ENCODE measurements at regions of chr17 and their contacts with region 1.

Region 1: DNA sequence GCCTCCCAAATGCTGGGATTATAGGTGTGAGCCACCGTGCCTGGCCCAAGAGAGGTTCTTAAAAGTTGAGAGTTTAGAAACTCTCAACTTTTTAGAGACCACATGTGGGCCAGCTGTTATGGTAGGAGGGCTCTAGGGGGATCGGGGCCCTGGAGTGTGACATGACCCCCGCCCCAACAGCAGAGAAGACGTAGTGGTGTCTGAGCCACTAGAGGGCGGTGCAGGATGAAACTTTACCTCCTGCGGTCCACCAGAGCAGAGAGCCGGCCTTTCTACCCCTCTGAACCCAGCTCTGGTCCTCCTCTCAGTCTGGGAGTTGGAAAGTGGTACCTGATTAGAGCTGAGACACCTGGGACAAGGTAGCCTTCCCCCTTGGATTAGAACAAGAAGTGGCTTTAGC is 7.4 kb downstream of the CDK5RAP3 start:
- DNase-seq: peak; percentile 87
- ATAC-seq: peak; percentile 94
- H3K4me3 Mint-ChIP-seq: no peak overlapping the region
- H3K27ac Mint-ChIP-seq: no peak overlapping the region
- H3K4me1 Mint-ChIP-seq: no peaks in the 10 kb centered on the region
- H3K27me3 Mint-ChIP-seq: no peaks in the 10 kb centered on the region
- CTCF ChIP-seq: peak; percentile 78; the same call in 1 of the 2 replicates

Region 2: GRCh38 chr17:47957591-47958428 is 20.5 kb before region 1 on chr17 and contains the start of gene PRR15L:
- CTCF ChIA-PET with region 1: interaction called, 17 read pairs
- POLR2A ChIA-PET with region 1: no interaction called
- DNase-seq: peak; percentile 66
- ATAC-seq: peak; percentile 80
- H3K4me3 Mint-ChIP-seq: peak within 1 kb of the TSS; percentile 45
- H3K27ac Mint-ChIP-seq: peak within 1 kb of the TSS; percentile 70
- H3K4me1 Mint-ChIP-seq: peaks cover 29% of the 10 kb centered on the region
- H3K27me3 Mint-ChIP-seq: peaks cover 15% of the 10 kb centered on the region
- CTCF ChIP-seq: no peak
- total RNA-seq, gene PRR15L: 0.59 to 1.1 TPM (median 1.1 TPM) in 3 replicates

Region 3: DNA sequence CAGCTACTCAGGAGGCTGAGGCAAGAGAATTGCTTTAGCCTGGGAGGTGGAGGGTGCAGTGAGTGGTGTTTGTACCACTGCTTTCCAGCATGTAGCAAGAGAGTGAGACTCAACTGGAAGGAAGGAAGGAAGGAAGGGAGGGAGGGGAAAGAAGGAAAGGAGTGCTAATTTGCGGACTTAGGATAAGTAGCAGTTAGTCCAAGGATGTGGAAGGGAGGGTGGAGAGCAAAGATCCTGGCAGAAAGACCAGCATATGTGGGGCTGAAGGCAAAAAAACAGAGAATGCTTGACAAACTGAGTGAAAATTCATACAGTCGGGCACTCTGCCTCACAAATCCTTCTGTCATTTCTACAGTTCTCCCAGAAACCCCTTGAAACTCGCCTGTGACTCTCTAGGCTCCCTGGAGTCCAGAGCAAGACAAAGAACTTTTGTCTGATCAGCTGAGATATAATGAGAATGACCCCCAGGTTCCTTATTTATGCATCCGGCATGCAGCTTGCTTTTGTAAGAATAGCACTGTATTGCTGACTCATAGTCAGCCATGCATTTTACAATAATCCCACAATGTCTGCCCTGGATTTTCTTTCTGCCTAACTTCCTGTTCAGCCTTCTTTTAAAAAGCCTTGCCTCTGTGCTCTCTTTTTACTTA is 24.1 kb after region 1 on chr17:
- CTCF ChIA-PET with region 1: interaction called, 33 read pairs
- POLR2A ChIA-PET with region 1: no interaction called
- DNase-seq: no peak
- ATAC-seq: no peak
- H3K4me3 Mint-ChIP-seq: peak overlapping the region; percentile 21
- H3K27ac Mint-ChIP-seq: peak overlapping the region; percentile 75
- H3K4me1 Mint-ChIP-seq: peaks cover 52% of the 10 kb centered on the region
- H3K27me3 Mint-ChIP-seq: no peaks in the 10 kb centered on the region; the same call in 1 of the 2 replicates
- CTCF ChIP-seq: no peak